ENCODE measurements at regions of chr3 and their contacts with region 1.

Region 1: DNA sequence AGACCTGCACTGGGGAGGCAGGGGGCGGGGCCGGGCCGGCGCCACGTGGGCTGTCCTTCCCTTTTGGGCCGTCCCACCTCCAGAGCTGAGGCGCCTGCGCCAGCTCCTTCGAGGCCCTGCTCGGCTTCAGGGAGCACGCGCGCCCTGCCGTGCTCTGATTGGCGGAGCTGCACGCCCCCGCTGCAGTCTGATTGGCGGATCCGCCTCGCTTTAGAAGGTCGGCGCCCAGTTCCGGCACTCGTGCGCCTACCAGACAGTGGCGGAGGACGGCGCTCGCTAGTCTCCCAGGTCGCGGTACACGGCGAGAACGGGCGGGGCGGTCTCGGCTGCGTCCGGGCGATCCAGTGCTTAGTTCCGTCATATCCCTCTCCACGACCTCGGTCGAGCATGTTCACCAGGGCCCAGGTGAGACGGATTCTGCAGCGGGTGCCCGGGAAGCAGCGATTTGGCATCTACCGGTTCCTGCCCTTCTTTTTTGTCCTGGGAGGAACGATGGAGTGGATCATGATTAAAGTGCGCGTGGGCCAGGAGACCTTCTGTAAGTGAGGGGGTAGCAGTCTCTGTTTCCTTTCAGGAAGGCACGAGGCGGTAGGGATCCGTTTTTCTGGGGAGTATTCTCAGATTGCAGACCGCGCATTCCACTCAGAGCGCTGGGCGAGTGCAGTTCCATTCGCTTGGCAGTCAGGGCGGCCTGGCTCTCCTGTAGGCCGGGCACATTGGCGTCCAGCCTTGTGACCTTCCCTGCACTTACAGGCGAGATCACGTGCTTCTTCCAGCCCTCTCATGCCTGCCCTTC is at the start of gene UQCC5:
- DNase-seq: peak; percentile 87 to 97 (median 92)
- ATAC-seq: peak; percentile 89
- H3K4me3 ChIP-seq: peak within 1 kb of the TSS; percentile 91
- H3K27ac ChIP-seq: peak within 1 kb of the TSS; percentile 91
- H3K4me1 ChIP-seq: peaks cover 34 to 45% of the 10 kb centered on the region in 2 experiments
- H3K27me3 ChIP-seq: no peaks in the 10 kb centered on the region
- CTCF ChIP-seq: peak in 2 of 3 experiments; percentile 17 to 22; a peak in 3 of 6 replicates
- EP300 ChIP-seq: 0 out of 2 replicates have a peak, but pooled peaks have one; percentile 10
- POLR2A ChIP-seq: peak; percentile 91
- RAD21 ChIP-seq: peak in 1 of 2 experiments; percentile 13; a peak in 1 of 4 replicates
- polyA plus RNA-seq, gene UQCC5: 36.3 to 36.7 TPM

Region 2: GRCh38 chr3:52444860-52445793 is 91.4 kb before region 1 on chr3 and contains the start of gene SEMA3G:
- CTCF ChIA-PET with region 1: no interaction called
- POLR2A ChIA-PET with region 1: no interaction called
- in situ Hi-C with region 1: no loop called
- intact Hi-C with region 1: no loop called
- DNase-seq: peak; percentile 64 to 74 (median 71)
- ATAC-seq: peak; percentile 96
- H3K4me3 ChIP-seq: no peak within 1 kb of the TSS
- H3K27ac ChIP-seq: no peak within 1 kb of the TSS
- H3K4me1 ChIP-seq: peaks cover 0 to 31% of the 10 kb centered on the region in 2 experiments; a peak in 2 of 5 replicates
- H3K27me3 ChIP-seq: peaks cover 0 to 4% of the 10 kb centered on the region in 2 experiments; a peak in 1 of 5 replicates
- CTCF ChIP-seq: peak; percentile 52 to 72 (median 54)
- EP300 ChIP-seq: no peak
- POLR2A ChIP-seq: no peak
- RAD21 ChIP-seq: no peak; a peak in 1 of 4 replicates
- polyA plus RNA-seq, gene SEMA3G: not detected

Region 3: DNA sequence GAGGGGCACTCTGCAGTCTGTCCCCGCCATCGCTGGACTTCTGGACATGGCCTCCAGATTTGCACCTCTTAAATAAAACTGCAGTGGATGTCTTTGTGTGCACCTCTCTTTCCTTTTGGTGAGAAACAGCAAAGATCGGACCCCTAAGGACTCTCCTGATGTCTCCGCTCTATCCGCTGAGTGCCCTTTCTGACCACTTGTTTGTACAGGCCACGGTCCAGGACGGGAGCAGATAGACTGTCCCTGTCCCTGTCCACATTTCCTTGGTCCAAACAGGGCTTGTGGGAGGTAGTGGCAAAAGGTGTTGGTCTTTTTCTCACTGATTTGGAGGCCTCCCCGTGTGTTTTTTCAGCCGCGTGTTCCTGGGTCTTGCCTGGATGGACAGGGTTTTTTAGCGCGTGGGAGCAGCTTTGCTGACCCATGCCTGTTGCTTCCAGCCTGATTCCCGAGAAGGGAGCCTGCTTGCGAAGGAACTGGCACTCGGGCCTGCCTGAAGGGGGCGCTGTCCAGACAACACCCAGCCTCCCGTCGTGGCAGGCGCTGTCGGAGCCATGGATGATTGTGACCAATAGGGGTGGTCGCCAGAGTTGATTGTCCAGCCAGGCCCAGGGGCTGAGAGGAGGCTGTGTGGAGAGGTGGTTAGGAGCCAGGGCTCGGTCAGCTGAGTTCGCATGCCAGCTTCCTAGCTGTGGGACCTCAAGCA is 54.6 kb before region 1 on chr3:
- CTCF ChIA-PET with region 1: no interaction called
- POLR2A ChIA-PET with region 1: no interaction called
- in situ Hi-C with region 1: no loop called
- intact Hi-C with region 1: loop called (anchors 2 kb)
- DNase-seq: peak; percentile 60 to 74 (median 65)
- ATAC-seq: peak; percentile 88
- H3K4me3 ChIP-seq: no peak overlapping the region
- H3K27ac ChIP-seq: no peak overlapping the region
- H3K4me1 ChIP-seq: peaks cover 0 to 10% of the 10 kb centered on the region in 2 experiments; a peak in 2 of 5 replicates
- H3K27me3 ChIP-seq: no peaks in the 10 kb centered on the region
- CTCF ChIP-seq: peak; percentile 62 to 82 (median 64)
- EP300 ChIP-seq: no peak
- POLR2A ChIP-seq: no peak
- RAD21 ChIP-seq: peak in 1 of 2 experiments; percentile 33; a peak in 1 of 4 replicates

Region 4: GRCh38 chr3:52512105-52512504 is 24.5 kb before region 1 on chr3:
- CTCF ChIA-PET with region 1: no interaction called
- POLR2A ChIA-PET with region 1: no interaction called
- in situ Hi-C with region 1: no loop called
- intact Hi-C with region 1: no loop called
- DNase-seq: no peak
- ATAC-seq: no peak
- H3K4me3 ChIP-seq: no peak overlapping the region
- H3K27ac ChIP-seq: no peak overlapping the region
- H3K4me1 ChIP-seq: peaks cover 0 to 37% of the 10 kb centered on the region in 2 experiments; a peak in 2 of 5 replicates
- H3K27me3 ChIP-seq: peaks cover 0 to 37% of the 10 kb centered on the region in 2 experiments; a peak in 2 of 5 replicates
- CTCF ChIP-seq: no peak
- EP300 ChIP-seq: no peak
- POLR2A ChIP-seq: no peak
- RAD21 ChIP-seq: no peak

Region 5: GRCh38 chr3:52552089-52552488 is 15.5 kb after region 1 on chr3:
- CTCF ChIA-PET with region 1: no interaction called
- POLR2A ChIA-PET with region 1: interaction called, 10 read pairs
- in situ Hi-C with region 1: no loop called
- intact Hi-C with region 1: no loop called
- DNase-seq: no peak
- ATAC-seq: no peak
- H3K4me3 ChIP-seq: no peak overlapping the region
- H3K27ac ChIP-seq: no peak overlapping the region
- H3K4me1 ChIP-seq: peaks cover 0 to 4% of the 10 kb centered on the region in 2 experiments; a peak in 2 of 5 replicates
- H3K27me3 ChIP-seq: no peaks in the 10 kb centered on the region
- CTCF ChIP-seq: no peak
- EP300 ChIP-seq: no peak
- POLR2A ChIP-seq: no peak
- RAD21 ChIP-seq: no peak